Left colon (tissue), 2 donors: ENCODE measurements at regions of chr2 and their contacts with region 1.

Region 1: GRCh38 chr2:134118279-134119116 is 135.4 kb upstream of the MGAT5 start:
- DNase-seq: peak; percentile 87 to 93
- ATAC-seq: peak; percentile 56

Region 2: DNA sequence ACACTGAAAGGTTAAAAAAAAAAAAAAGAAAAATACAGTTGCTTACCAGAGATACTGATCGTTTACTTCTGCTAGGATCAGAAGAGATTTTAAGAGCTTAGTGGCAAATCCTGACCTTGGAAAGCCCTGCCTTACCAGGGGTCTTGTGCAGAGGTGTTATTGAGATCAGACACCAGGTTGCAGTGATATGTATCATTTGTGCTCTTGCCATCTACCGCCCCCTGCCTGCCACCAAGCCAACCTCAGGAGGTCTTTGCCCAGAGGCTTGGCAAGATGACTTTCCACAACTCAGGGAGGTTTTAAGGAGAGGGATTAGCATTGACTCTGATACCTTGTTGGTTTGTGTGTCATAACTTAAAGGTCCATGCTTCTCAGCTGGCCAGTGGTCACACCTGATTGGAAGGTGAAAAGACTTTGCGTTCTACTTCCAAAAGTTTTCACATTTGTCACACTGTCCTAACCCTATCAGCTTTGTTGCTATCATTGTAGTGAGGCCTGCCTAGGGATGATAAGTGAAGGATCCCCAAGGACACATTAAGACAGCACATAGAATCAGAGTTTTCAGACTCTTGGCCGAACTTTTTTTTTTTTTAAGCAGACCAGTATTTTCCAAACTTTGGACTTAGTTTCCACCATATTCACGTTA is 89.2 kb after region 1 on chr2:
- intact Hi-C with region 1: loop called in 1 of 2 experiments (anchors 5 kb)
- DNase-seq: peak; percentile 57 to 82
- ATAC-seq: peak; percentile 98

Region 3: DNA sequence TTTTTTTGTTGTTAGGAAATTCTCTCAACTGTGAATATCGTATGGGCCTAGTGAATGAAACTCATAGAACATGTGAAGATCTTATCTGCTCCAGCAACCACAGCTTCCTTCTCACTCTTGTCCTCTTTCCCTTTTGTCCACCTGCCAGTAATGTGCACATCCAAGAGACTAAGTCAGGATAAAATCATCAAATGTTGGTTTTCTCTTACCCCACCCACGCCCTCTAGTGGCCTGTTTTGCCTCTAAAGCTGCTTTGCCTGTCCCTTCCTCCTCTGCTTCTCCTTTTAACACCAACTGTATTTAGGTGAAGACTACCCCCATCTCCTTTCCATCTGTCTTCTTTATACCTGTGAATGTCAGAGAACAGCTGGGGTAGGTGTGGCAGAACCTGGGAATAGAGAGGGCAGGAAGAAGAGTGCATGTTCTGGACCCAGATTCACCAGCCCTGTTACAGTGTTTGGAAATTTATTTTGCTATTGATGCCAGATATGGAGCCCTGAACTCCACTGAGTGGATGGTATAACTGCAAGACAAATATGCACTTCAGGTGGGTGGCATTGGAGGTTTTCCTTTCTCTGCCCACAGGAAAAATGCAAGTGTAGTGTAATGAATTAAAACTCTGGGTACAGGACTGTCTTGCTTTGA is 127.0 kb after region 1 on chr2:
- intact Hi-C with region 1: loop called in 1 of 2 experiments (anchors 2 kb)
- DNase-seq: peak; percentile 73 to 93
- ATAC-seq: peak; percentile 69

Region 4: GRCh38 chr2:134411828-134412638 is 293.5 kb after region 1 on chr2:
- intact Hi-C with region 1: loop called in 1 of 2 experiments (anchors 5 kb)
- DNase-seq: peak; percentile 61 to 62
- ATAC-seq: peak; percentile 90

Region 5: DNA sequence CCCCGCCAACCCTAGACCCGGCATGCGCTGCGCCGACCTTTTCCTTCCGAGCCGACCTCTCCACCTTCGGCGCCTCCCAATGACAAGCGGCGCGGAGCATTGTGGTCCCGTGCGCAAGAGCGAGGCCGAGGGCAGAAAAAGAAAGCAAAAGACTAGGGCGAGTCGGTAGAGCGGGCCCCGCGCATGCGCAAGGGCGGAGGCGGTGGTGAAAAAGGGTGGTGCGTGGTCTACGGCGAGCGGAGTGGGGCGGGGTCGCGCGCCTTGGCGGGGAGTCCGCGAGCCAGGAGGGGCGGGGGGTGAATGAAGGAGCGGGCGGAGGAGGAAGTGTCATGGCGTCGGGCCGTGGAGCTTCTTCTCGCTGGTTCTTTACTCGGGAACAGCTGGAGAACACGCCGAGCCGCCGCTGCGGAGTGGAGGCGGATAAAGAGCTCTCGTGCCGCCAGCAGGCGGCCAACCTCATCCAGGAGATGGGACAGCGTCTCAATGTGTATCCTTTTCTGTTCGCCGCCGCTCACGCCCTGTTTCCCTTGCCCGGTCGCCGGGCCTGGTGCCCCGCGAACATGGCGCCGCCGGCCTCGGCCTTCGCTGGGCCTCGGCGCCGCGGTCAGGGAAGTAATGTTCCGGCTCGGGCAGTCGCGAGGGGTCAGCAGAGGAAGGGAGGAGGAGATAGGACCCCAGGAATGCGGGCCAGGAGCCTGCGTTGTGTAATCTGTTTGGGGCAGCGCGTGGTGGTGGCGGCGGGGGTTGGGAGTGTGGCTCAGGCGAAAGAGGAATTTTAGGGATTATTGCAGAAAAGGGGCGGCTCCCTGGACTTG is 800.2 kb after region 1 on chr2 and contains the start of gene CCNT2:
- intact Hi-C with region 1: loop called in 1 of 2 experiments (anchors 10 kb)
- DNase-seq: peak; percentile 99
- ATAC-seq: peak; percentile 84
- total RNA-seq, gene CCNT2: 33.9 to 35.3 TPM